Activated CD4-positive, alpha-beta T cell treated with anti-CD3 and anti-CD28 coated beads for 36 hours (primary cell): ENCODE measurements at regions of chr12 and their contacts with region 1.

Region 1: GRCh38 chr12:44317651-44318126 is 481.8 kb downstream of the TMEM117 start:
- DNase-seq: peak; percentile 7
- ATAC-seq: peak; percentile 72
- H3K4me3 Mint-ChIP-seq: no peak overlapping the region
- H3K27ac Mint-ChIP-seq: no peak overlapping the region
- H3K4me1 Mint-ChIP-seq: no peaks in the 10 kb centered on the region
- H3K27me3 Mint-ChIP-seq: no peaks in the 10 kb centered on the region

Region 2: DNA sequence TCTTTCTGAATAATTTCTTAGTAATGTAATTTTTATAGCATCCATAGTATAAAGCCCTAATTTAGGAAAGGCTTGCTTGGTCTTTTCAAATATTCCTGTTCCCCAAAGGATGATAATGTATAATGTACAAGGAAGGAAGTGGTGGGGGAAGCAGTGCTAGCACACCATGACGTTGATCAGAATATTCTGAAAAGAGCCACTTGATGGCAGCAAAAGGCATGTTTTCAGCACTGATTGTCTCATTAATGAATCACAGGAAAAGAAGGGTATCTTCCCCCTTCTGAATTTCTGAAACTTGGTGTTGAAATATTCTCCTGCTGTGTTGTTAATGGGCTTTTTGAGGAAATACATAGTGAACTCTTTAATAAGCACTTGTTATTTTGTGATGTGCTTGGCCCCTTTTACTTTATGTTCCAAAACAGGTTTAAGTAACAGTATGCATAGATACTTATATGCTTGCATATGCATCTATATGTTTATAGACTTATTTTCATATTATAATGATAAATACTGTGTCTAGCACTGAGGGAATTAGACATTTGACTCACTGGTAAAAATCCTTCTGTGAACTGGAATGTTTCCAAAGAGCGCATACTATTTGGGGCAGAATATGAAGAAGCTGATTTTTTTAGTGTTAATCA is 359.8 kb before region 1 on chr12:
- CTCF ChIA-PET with region 1: no interaction called
- POLR2A ChIA-PET with region 1: no interaction called
- intact Hi-C with region 1: loop called in 1 of 2 experiments (anchors 5 kb)
- DNase-seq: peak; percentile 18
- ATAC-seq: peak; percentile 61
- H3K4me3 Mint-ChIP-seq: no peak overlapping the region
- H3K27ac Mint-ChIP-seq: no peak overlapping the region
- H3K4me1 Mint-ChIP-seq: no peaks in the 10 kb centered on the region
- H3K27me3 Mint-ChIP-seq: no peaks in the 10 kb centered on the region

Region 3: GRCh38 chr12:44379831-44380230 is 62.1 kb after region 1 on chr12:
- CTCF ChIA-PET with region 1: no interaction called
- POLR2A ChIA-PET with region 1: no interaction called
- intact Hi-C with region 1: no loop called
- DNase-seq: no peak
- ATAC-seq: no peak
- H3K4me3 Mint-ChIP-seq: no peak overlapping the region
- H3K27ac Mint-ChIP-seq: no peak overlapping the region
- H3K4me1 Mint-ChIP-seq: no peaks in the 10 kb centered on the region
- H3K27me3 Mint-ChIP-seq: no peaks in the 10 kb centered on the region